GM10248 (cell line): ENCODE measurements at regions of chr11 and their contacts with region 1.

Region 1: DNA sequence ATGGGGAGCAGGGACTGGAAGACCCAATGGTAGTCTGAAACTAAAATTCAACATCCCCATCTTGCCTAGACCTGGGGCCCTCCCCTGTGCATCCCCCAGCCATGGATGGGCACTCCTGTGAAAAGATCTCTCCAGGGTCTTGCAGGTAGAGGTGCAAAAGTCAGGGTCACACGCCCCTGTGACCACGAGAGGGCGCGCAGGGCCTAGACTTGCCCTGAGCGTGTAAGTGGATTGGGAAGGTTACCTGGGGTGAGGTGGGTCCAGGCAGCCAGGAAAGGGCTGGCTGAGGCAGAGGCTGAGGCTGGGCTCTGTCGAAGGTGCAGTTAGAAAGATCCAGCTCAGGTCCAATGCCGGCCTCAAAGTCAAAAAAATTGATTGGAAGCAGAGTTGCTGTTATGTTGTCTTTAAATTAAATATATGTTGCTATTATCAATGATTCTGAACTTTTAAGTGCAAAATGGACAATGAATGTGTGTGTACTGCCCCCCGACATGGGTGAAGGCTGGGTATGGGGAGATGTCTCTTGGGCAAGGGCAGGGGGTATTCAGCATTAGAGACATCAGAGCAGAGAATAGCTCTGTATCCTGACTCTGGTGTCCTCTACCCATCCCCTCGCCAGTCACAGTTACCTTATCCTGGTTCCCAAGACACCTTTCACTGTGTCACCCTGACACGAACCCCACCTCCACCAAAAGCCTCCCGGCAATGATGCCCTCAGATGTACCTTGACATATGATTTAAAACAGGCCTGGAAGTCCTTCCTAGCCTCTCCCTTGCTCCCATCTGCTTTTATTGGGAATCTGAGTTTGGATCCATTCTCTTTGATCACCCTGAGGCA is 4.7 kb upstream of the POU2F3 start:
- DNase-seq: peak; percentile 83
- CTCF ChIP-seq: peak; percentile 93

Region 2: DNA sequence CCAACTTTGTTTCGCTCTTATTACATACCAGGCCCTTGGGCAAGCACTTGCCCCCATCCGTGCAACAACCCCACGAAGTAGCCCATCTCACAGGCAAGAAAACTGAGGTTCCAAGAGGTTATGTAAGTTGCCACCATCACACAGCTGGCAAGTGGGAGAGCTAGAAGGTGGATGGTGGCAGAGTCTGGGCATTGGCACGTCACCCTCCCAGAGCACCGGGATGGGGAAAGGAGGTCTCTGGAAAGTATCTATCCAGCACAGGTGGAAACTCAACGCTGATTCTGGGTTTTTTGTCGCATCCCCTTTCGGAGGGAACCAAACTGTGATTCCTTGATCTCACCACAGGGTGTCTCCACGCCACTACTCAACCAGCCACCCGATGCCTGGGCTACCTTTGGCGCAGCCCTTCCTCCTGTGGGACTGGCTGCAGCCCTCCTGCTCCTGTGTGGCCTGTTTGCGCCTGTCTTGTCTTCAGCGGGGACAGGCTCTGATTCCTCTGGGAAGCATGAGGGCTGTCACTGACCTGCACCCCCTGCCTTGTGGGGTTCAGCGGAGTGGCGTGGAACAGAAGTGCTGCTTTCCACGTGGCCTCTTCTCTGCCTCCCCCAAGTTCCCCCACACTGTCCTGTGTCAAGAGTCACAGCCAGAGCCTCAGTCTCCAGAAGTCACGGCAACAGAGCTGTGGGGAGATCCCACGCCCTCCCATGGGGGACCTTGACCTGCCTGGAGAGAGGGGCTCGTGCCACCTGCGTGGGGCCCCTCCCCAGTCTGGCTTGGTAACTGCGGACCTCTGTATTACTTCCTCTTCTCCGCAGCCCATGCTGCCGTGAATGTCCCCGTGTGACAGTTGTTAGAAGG is 63.0 kb before region 1 on chr11:
- CTCF ChIA-PET with region 1: interaction called, 219 read pairs
- POLR2A ChIA-PET with region 1: no interaction called
- DNase-seq: peak; percentile 82
- CTCF ChIP-seq: peak; percentile 74

Region 3: DNA sequence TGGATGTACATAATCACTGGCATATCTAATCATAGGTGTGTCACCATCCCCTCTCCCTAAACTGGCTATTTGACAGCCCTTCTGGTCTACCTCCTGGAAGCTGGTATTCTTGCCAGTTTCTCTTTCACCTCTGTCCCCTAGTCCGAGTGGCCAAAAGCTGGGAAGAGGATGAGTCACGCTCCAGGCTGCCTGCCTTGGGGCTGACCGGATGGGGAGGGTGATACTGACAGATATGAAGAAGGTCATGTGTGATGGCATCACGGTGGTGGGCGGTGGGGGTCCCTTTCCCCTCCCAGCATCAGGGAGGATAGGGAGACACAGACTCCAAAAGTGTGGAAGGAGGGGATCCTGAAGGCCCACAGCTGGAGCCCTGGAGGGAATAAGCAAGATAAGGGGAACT is 19.6 kb before region 1 on chr11:
- CTCF ChIA-PET with region 1: interaction called, 36 read pairs
- POLR2A ChIA-PET with region 1: no interaction called
- DNase-seq: no peak
- CTCF ChIP-seq: no peak

Region 4: GRCh38 chr11:120254788-120255518 is 19.7 kb after region 1 on chr11:
- CTCF ChIA-PET with region 1: interaction called, 144 read pairs
- POLR2A ChIA-PET with region 1: no interaction called
- DNase-seq: peak; percentile 68
- CTCF ChIP-seq: no peak

Region 5: DNA sequence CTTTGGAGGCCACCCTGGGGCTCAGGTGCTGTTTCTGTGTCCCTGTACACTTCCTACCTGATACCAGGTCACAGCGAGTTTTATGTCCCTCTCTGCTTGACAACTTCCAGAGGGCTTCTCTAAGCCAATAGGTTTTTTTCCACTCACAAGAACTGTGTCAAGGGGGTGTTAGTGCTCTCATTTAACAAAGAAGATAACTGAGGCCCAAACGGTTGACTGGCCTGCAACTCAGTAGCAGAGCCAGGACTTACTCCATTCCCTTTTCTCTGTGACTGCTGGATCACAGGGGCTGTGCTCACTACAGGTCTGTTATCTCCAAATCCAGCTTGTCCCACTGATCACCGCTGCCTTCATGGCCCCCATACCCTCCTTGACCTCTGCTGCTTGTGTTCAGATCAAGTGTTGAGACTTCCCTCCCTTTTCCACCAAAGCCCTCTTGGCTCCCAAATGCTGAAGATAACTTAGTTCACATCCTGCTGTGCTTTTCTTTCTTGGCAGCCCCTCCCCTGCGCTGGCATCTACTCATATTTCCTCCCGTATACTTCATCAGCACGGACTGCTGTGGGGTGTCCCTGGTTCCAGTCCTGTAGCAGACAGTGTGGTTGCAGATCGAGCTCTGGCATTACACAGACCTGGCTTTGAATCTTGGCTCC is 46.0 kb after region 1 on chr11:
- CTCF ChIA-PET with region 1: interaction called, 28 read pairs
- POLR2A ChIA-PET with region 1: no interaction called
- DNase-seq: no peak
- CTCF ChIP-seq: no peak

Region 6: GRCh38 chr11:120375076-120375475 is 139.8 kb after region 1 on chr11:
- CTCF ChIA-PET with region 1: no interaction called
- POLR2A ChIA-PET with region 1: no interaction called
- DNase-seq: no peak
- CTCF ChIP-seq: no peak